Sigmoid colon (tissue), 7 donors: ENCODE measurements at regions of chr15 and their contacts with region 1.

Region 1: GRCh38 chr15:89243691-89244471 is at the start of gene FANCI:
- DNase-seq: peak; percentile 96
- H3K4me3 ChIP-seq: peak within 1 kb of the TSS; percentile 53 to 79 (median 66)
- H3K27ac ChIP-seq: peak within 1 kb of the TSS; percentile 45 to 66 (median 62)
- H3K4me1 ChIP-seq: peaks cover 0 to 18% (median 15%) of the 10 kb centered on the region in 4 donors
- H3K27me3 ChIP-seq: no peaks in the 10 kb centered on the region
- CTCF ChIP-seq: peak in 3 of 4 experiments; percentile 24 to 45 (median 33)
- EP300 ChIP-seq: no peak
- POLR2A ChIP-seq: no peak
- total RNA-seq, gene FANCI: 2.0 to 5.2 (median 3.3) TPM

Region 2: DNA sequence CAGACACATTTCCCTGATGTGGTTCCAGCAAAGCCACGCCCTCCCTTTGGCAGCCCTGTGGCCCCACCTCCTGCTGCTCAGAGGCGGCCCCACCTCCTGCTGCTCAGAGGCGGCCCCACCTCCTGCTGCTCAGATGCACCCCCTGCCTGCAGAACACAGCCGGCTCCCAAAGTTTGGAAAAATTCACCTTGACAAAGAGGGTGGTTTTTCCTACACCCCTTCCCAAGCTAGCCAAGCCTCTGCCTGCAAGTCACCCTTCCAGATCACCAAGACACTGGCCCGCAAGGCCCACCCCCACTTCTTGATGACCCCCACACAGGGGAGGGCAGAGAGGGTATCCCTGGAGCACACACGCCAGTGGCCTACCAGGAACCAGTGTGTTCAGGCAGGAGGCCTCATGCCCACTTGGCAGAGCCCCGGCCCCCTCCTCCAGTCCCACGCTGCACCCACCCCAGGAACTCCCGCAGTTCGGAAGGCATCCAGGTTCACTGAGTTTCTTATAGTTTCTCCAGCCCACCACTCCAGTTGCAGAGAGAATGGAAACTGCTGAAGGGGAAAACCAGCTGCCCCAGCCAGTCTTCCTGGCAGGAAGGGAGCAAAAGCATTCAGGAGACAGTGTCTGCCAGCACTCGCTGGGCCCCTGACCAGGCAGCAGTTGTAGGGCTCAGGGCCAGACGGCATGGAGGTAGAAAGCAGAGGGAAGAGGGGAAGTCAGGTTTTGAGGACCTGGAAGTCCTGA is 346.3 kb before region 1 on chr15:
- intact Hi-C with region 1: loop called (anchors 5 kb)
- DNase-seq: peak; percentile 94
- H3K4me3 ChIP-seq: no peak overlapping the region
- H3K27ac ChIP-seq: peak overlapping the region; percentile 43 to 77 (median 62)
- H3K4me1 ChIP-seq: peaks cover 0 to 36% (median 32%) of the 10 kb centered on the region in 4 donors
- H3K27me3 ChIP-seq: peaks cover 11 to 33% (median 29%) of the 10 kb centered on the region in 3 donors
- CTCF ChIP-seq: peak; percentile 35 to 70 (median 55)
- EP300 ChIP-seq: no peak
- POLR2A ChIP-seq: no peak

Region 3: DNA sequence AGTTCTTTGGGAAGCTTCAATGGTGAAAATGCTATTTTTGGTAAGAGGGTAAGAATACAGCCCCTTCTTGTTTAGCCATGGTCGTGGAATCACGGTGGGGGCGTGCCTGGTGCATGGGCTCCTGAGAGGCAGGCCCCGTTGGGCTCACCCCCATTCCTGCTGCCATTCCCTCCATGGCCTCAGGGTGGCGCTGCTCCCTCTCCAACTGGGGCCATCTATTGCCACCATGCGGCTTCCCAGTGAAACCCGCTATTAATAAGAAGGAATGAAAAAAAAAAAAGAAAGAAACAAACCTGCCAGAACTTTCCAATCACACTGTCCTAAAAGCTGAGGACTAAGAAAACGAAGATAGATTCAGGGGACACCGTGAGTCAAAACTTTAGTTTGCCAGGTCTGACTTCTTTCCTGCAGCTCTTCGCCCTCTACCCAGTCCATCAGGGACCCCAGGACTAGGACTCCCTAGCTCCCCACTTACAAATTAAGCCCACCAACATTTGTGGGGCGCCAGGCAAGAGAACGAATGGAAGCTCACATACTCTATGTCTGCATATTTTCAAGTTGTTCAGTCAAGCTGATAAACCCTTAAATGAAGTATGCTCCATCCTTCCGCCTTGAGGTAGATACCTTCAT is 186.3 kb before region 1 on chr15:
- intact Hi-C with region 1: loop called (anchors 5 kb)
- DNase-seq: peak; percentile 91
- H3K4me3 ChIP-seq: no peak overlapping the region
- H3K27ac ChIP-seq: no peak overlapping the region
- H3K4me1 ChIP-seq: peaks cover 0 to 8% (median 4%) of the 10 kb centered on the region in 4 donors
- H3K27me3 ChIP-seq: no peaks in the 10 kb centered on the region
- CTCF ChIP-seq: peak; percentile 94 to 99 (median 97)
- EP300 ChIP-seq: no peak
- POLR2A ChIP-seq: no peak

Region 4: GRCh38 chr15:89206908-89207331 is 37.0 kb before region 1 on chr15:
- intact Hi-C with region 1: loop called (anchors 2 kb)
- DNase-seq: peak; percentile 84
- H3K4me3 ChIP-seq: peak overlapping the region in 3 of 4 donors; percentile 15 to 20 (median 16)
- H3K27ac ChIP-seq: no peak overlapping the region
- H3K4me1 ChIP-seq: peaks cover 0 to 5% (median 4%) of the 10 kb centered on the region in 4 donors
- H3K27me3 ChIP-seq: no peaks in the 10 kb centered on the region
- CTCF ChIP-seq: peak; percentile 77 to 97 (median 92)
- EP300 ChIP-seq: no peak
- POLR2A ChIP-seq: no peak

Region 5: GRCh38 chr15:89334510-89335288 is 90.8 kb after region 1 on chr15 and contains the start of gene POLG:
- intact Hi-C with region 1: loop called (anchors 1 kb)
- DNase-seq: peak; percentile 100
- H3K4me3 ChIP-seq: peak within 1 kb of the TSS; percentile 61 to 98 (median 85)
- H3K27ac ChIP-seq: peak within 1 kb of the TSS; percentile 86 to 94 (median 94)
- H3K4me1 ChIP-seq: peaks cover 0 to 51% (median 47%) of the 10 kb centered on the region in 4 donors
- H3K27me3 ChIP-seq: no peaks in the 10 kb centered on the region
- CTCF ChIP-seq: no peak
- EP300 ChIP-seq: no peak
- POLR2A ChIP-seq: peak; percentile 84 to 92
- total RNA-seq, gene POLG: 37.7 to 43.4 (median 39.8) TPM